MCF 10A (cell line): ENCODE measurements at regions of chr15 and their contacts with region 1.

Region 1: GRCh38 chr15:101294731-101295606 is at the start of gene SNRPA1:
- DNase-seq: peak; percentile 94
- H3K4me3 Mint-ChIP-seq: peak within 1 kb of the TSS; percentile 79
- H3K27ac Mint-ChIP-seq: peak within 1 kb of the TSS; percentile 92
- H3K4me1 Mint-ChIP-seq: peaks cover 27% of the 10 kb centered on the region
- H3K27me3 Mint-ChIP-seq: no peaks in the 10 kb centered on the region
- CTCF ChIP-seq: no peak
- total RNA-seq, gene SNRPA1: 99.4 and 99.5 TPM in 2 replicates

Region 2: DNA sequence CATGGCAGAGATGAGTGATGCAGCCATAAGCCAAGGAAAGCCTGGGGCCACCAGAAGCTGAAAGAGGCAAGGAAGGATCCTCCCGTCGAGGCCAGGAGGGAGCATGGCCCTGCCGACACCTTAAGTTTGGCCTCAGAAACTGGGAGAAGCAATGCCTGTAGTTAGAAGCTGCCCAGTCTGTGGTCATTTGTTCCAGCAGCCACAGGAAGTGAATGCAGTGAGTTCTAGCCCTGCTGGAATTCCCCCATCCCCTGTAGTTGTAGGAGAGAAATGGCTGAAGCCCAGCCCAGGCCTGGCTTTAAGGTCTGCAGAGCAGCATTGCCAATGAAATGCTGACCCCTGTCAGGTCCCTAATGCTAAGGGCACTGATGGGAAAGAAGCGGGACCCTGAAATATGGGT is 31.0 kb before region 1 on chr15:
- CTCF ChIA-PET with region 1: no interaction called
- POLR2A ChIA-PET with region 1: no interaction called
- intact Hi-C with region 1: no loop called
- DNase-seq: no peak
- H3K4me3 Mint-ChIP-seq: no peak overlapping the region
- H3K27ac Mint-ChIP-seq: no peak overlapping the region
- H3K4me1 Mint-ChIP-seq: no peaks in the 10 kb centered on the region
- H3K27me3 Mint-ChIP-seq: no peaks in the 10 kb centered on the region
- CTCF ChIP-seq: no peak

Region 3: GRCh38 chr15:101277943-101278564 is 16.9 kb before region 1 on chr15:
- CTCF ChIA-PET with region 1: interaction called, 6 read pairs
- POLR2A ChIA-PET with region 1: interaction called, 34 read pairs
- intact Hi-C with region 1: no loop called
- DNase-seq: no peak
- H3K4me3 Mint-ChIP-seq: peak overlapping the region; percentile 100
- H3K27ac Mint-ChIP-seq: peak overlapping the region; percentile 99
- H3K4me1 Mint-ChIP-seq: peaks cover 13% of the 10 kb centered on the region
- H3K27me3 Mint-ChIP-seq: no peaks in the 10 kb centered on the region
- CTCF ChIP-seq: no peak

Region 4: DNA sequence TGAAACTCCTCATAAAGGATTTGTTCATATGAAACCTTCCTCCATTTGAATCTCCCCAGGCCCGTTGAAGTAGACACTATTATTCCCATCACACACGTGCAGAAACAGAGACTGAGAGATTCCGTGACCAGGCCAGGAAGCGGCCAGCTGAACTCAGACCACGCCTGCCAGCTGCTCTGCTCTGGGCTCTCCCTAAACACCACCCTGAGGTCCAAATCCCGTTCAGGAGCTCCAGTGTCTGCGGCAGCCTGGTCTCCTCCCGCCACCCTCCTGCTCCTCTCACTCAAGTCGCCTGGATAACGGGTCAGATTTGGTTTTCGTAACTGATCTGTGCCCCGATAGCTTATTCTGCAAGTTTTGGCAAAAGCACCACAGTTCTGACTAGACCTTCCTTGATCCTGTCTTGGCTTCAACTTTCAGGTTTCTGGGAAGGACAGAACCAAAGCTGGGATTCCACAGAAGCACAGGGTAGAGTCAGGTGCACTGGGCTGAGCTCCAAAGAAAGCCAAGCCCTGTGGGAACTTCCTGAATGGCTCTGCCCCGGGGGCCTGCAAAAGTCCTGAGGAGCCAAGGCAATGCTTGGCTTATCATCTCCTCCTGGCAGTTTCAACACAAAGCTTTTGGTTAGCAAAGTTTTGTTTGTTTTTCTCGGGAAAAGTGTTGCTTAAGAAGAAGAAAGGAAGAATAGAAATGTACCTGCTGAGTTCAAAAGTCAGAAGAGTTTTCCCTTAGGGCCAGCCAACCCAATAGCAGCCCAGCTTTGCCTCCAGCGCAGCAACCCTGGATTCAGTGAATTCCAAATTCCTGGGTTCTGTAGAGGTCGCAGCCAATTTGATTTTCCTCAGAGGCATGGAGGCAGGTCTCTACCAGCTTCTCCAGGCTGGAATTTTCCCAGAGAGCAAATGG is 53.9 kb after region 1 on chr15:
- CTCF ChIA-PET with region 1: interaction called, 4 read pairs
- POLR2A ChIA-PET with region 1: interaction called, 34 read pairs
- intact Hi-C with region 1: no loop called
- DNase-seq: peak; percentile 99
- H3K4me3 Mint-ChIP-seq: peak overlapping the region; percentile 35
- H3K27ac Mint-ChIP-seq: peak overlapping the region; percentile 66
- H3K4me1 Mint-ChIP-seq: peaks cover 24% of the 10 kb centered on the region
- H3K27me3 Mint-ChIP-seq: no peaks in the 10 kb centered on the region
- CTCF ChIP-seq: no peak

Region 5: GRCh38 chr15:101501703-101502373 is 206.9 kb after region 1 on chr15:
- CTCF ChIA-PET with region 1: interaction called, 4 read pairs
- POLR2A ChIA-PET with region 1: interaction called, 10 read pairs
- intact Hi-C with region 1: loop called (anchors 5 kb)
- DNase-seq: peak; percentile 43
- H3K4me3 Mint-ChIP-seq: no peak overlapping the region
- H3K27ac Mint-ChIP-seq: no peak overlapping the region
- H3K4me1 Mint-ChIP-seq: peaks cover 14% of the 10 kb centered on the region
- H3K27me3 Mint-ChIP-seq: peaks cover 14% of the 10 kb centered on the region
- CTCF ChIP-seq: peak; percentile 19

Region 6: GRCh38 chr15:101646672-101647071 is 351.7 kb after region 1 on chr15:
- CTCF ChIA-PET with region 1: interaction called, 320 read pairs
- POLR2A ChIA-PET with region 1: interaction called, 102 read pairs
- intact Hi-C with region 1: loop called (anchors 1 kb)
- DNase-seq: no peak
- H3K4me3 Mint-ChIP-seq: no peak overlapping the region
- H3K27ac Mint-ChIP-seq: no peak overlapping the region
- H3K4me1 Mint-ChIP-seq: no peaks in the 10 kb centered on the region
- H3K27me3 Mint-ChIP-seq: no peaks in the 10 kb centered on the region
- CTCF ChIP-seq: no peak

Region 7: DNA sequence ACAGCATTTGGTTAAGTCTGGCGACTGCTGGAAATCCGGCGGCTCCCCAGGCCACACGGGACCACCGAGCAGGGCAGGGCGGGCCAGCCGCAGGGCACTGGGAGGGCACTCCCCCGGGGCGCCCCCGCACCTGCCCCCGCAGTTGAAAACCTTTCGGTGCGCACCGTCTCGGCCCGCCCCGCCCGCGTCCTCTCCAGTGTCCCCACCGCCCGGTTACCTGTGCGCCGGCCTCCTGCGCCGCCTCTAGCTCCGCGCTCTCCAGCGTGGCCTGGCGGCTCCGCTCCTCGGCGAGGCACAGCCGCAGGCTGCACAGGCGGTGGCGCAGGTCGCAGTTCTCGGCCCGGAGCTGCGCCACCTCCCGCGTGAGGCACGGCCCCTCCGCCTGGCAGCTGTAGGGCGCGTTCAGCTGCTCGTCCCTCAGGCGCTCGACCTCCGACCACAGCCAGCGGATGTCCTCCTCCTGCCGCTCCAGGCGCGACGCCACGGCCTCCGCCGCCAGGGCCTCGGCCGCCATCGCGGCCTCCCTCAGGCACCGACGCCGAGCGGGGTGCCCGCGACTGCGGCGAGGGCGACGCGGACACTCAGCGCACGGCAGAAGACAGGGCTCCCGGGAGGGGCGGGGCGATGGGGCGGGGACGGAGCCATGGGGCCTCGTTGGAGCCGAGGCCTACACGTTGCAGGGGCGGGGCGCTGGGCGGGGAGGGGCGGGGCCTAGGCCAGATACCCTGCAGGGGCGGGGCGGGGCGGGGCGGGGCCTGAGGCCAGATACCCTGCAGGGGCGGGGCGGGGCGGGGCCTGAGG is 429.1 kb after region 1 on chr15 and contains the start of gene TARS3:
- CTCF ChIA-PET with region 1: no interaction called
- POLR2A ChIA-PET with region 1: interaction called, 15 read pairs
- intact Hi-C with region 1: loop called (anchors 10 kb)
- DNase-seq: peak; percentile 92
- H3K4me3 Mint-ChIP-seq: peak within 1 kb of the TSS; percentile 75
- H3K27ac Mint-ChIP-seq: peak within 1 kb of the TSS; percentile 46
- H3K4me1 Mint-ChIP-seq: peaks cover 4% of the 10 kb centered on the region
- H3K27me3 Mint-ChIP-seq: peaks cover 21% of the 10 kb centered on the region
- CTCF ChIP-seq: no peak
- total RNA-seq, gene TARS3: 5.0 and 7.2 TPM in 2 replicates